ENCODE measurements at regions of chr5 and their contacts with region 1.

Region 1: GRCh38 chr5:108727651-108728565 is 19.8 kb upstream of the FER start:
- DNase-seq: no peak
- ATAC-seq: peak; percentile 91
- H3K4me3 ChIP-seq: peak overlapping the region; percentile 67
- H3K27ac ChIP-seq: peak overlapping the region; percentile 92
- H3K4me1 ChIP-seq: peaks cover 28% of the 10 kb centered on the region
- H3K27me3 ChIP-seq: no peaks in the 10 kb centered on the region
- CTCF ChIP-seq: no peak
- EP300 ChIP-seq: no peak
- POLR2A ChIP-seq: peak; percentile 79
- RAD21 ChIP-seq: no peak

Region 2: DNA sequence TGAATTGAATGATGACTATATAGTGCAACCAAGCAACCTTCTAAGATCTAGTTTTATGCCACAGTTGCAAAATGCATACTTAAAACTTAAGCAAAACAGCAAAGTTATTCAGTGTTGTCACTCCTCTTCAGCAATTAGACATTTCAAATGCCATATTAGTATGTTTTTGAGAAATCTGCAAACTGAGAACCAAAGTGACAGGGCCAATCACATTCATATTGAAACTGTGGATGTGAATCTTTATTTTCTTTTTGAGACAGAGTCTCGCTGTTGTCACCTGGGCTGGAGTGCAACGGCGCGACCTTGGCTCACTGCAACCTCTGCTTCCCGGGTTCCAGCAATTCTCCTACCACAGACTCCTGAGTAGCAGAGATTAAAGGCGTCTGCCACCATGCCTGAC is 807.9 kb before region 1 on chr5:
- CTCF ChIA-PET with region 1: no interaction called
- POLR2A ChIA-PET with region 1: no interaction called
- RAD21 ChIA-PET with region 1: no interaction called
- SMC1A ChIA-PET with region 1: no interaction called
- in situ Hi-C with region 1: no loop called
- intact Hi-C with region 1: no loop called
- DNase-seq: peak; percentile 16
- ATAC-seq: peak; percentile 83
- H3K4me3 ChIP-seq: no peak overlapping the region; the same call in 1 of the 2 replicates
- H3K27ac ChIP-seq: no peak overlapping the region; the same call in 1 of the 2 replicates
- H3K4me1 ChIP-seq: peaks cover 11% of the 10 kb centered on the region; the same call in 1 of the 2 replicates
- H3K27me3 ChIP-seq: no peaks in the 10 kb centered on the region
- CTCF ChIP-seq: no peak
- EP300 ChIP-seq: peak in 1 of 2 experiments; percentile 9; a peak in 1 of 4 replicates
- POLR2A ChIP-seq: no peak
- RAD21 ChIP-seq: no peak

Region 3: DNA sequence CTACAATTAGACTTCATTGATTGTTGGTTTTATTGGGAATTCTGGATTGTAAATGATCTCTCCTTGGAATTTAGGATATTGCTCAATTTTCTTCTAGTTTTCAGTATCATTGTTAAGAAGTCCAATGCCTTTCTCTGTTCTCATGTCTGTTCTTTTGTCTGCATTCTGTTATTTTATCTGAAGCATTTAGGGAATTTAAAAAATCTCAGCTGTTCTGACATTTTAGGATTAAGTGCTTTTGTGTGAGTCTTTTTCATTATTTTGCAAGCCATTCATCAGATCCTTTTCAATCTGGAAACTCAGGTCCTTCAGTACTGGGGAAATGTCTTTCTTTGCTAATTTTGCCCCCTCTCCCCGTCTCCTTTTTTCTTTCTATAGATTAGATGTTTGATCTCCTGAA is 15.4 kb after region 1 on chr5:
- CTCF ChIA-PET with region 1: interaction called, 12 read pairs
- POLR2A ChIA-PET with region 1: interaction called, 42 read pairs
- RAD21 ChIA-PET with region 1: interaction called, 32 read pairs
- SMC1A ChIA-PET with region 1: interaction called, 40 read pairs
- in situ Hi-C with region 1: no loop called
- intact Hi-C with region 1: loop called (anchors 1 kb)
- DNase-seq: no peak
- ATAC-seq: no peak
- H3K4me3 ChIP-seq: no peak overlapping the region
- H3K27ac ChIP-seq: no peak overlapping the region
- H3K4me1 ChIP-seq: no peaks in the 10 kb centered on the region
- H3K27me3 ChIP-seq: no peaks in the 10 kb centered on the region
- CTCF ChIP-seq: no peak
- EP300 ChIP-seq: no peak
- POLR2A ChIP-seq: no peak
- RAD21 ChIP-seq: no peak

Region 4: DNA sequence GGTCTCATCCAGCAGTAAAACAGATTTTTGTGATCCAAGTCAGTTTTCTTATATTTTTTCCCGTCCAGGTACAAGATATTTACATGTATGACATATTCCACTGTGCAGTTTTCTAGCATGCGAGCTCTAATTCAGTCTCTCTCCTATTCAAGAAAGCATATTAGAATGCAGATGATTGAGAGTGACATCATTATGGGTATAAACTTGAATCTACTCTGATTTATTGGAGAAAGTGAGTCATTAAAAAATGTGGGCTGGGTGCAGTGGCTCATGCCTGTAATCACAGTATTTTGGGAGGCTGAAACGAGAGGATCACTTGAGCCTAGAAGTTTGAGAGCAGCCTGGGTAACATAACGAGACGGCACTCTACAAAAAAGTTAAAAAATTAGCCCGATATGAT is 26.0 kb after region 1 on chr5:
- CTCF ChIA-PET with region 1: interaction called, 8 read pairs
- POLR2A ChIA-PET with region 1: interaction called, 42 read pairs
- RAD21 ChIA-PET with region 1: interaction called, 17 read pairs
- SMC1A ChIA-PET with region 1: interaction called, 32 read pairs
- in situ Hi-C with region 1: no loop called
- intact Hi-C with region 1: no loop called
- DNase-seq: no peak
- ATAC-seq: no peak
- H3K4me3 ChIP-seq: no peak overlapping the region
- H3K27ac ChIP-seq: no peak overlapping the region
- H3K4me1 ChIP-seq: no peaks in the 10 kb centered on the region
- H3K27me3 ChIP-seq: no peaks in the 10 kb centered on the region
- CTCF ChIP-seq: no peak
- EP300 ChIP-seq: no peak
- POLR2A ChIP-seq: no peak
- RAD21 ChIP-seq: no peak

Region 5: DNA sequence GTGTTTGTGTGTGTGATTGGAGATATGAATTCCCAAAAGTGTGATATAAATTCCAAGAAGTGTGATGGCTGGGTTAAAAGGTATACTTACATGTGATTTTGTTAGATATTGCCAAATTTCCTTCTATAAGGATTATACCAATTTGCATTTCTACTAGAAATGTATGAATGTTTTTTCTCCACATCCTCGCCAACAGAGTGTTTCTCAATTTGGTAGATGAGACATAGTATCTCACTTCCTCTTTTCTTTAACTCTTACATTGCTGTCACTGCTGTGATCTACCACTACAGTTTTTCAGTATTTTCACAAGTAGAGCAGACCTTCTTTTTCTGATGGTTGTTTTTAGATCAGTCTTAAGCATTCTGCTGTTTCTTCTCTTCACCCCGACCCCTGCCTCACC is 131.1 kb after region 1 on chr5:
- CTCF ChIA-PET with region 1: no interaction called
- POLR2A ChIA-PET with region 1: interaction called, 4 read pairs
- RAD21 ChIA-PET with region 1: interaction called, 12 read pairs
- SMC1A ChIA-PET with region 1: interaction called, 3 read pairs
- in situ Hi-C with region 1: no loop called
- intact Hi-C with region 1: no loop called
- DNase-seq: peak; percentile 58
- ATAC-seq: peak; percentile 99
- H3K4me3 ChIP-seq: peak overlapping the region; percentile 28; the same call in 1 of the 2 replicates
- H3K27ac ChIP-seq: peak overlapping the region; percentile 72
- H3K4me1 ChIP-seq: peaks cover 13% of the 10 kb centered on the region
- H3K27me3 ChIP-seq: no peaks in the 10 kb centered on the region
- CTCF ChIP-seq: no peak
- EP300 ChIP-seq: peak; percentile 15 to 89; a peak in 2 of 4 replicates
- POLR2A ChIP-seq: no peak
- RAD21 ChIP-seq: 0 out of 2 replicates have a peak, but pooled peaks have one; percentile 1